Mammary epithelial cell (primary cell): ENCODE measurements at regions of chr12 and their contacts with region 1.

Region 1: DNA sequence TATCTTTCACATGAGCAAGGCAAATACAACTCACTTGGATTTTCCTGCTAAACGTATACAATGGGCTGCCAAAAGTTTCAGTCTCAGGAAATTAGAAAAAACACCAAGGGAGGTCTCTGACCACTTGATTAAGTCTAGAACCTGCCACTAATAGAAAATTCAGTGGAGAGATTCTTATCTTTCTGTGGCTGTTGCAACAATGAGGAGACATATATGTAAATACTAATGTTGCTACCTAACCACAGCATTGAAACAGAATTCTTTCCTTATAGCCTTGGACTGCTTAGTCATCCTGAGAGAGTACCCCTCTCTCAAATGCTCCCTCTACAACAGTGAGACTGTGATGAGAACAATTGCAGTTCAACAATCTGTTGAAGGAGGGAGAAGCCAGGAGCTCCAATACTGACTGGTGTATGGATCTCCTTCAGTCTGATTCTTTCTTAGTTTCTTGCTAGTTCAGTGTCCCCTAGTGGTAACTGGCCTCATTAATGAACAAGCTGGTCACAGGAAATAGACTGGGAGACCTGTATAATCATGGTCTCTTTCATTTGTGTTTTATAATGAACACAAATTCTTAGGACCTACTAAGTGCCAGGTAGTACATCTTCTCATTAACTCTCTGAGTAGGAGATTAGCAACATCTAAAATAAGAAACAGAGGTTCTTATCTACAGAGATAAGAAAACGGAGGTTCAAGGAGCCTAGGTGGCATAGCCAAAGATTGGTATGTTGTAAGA is 164.5 kb downstream of the SLC38A4 start:
- DNase-seq: peak; percentile 75
- H3K4me3 ChIP-seq: no peak overlapping the region
- H3K27ac ChIP-seq: peak overlapping the region; percentile 64
- H3K4me1 ChIP-seq: peaks cover 55% of the 10 kb centered on the region
- H3K27me3 ChIP-seq: no peaks in the 10 kb centered on the region
- CTCF ChIP-seq: peak; percentile 80 to 86

Region 2: GRCh38 chr12:46268590-46269558 is 392.4 kb before region 1 on chr12 and contains the start of gene SLC38A1:
- CTCF ChIA-PET with region 1: no interaction called
- dilution Hi-C with region 1: no loop called
- in situ Hi-C with region 1: no loop called
- intact Hi-C with region 1: loop called (anchors 5 kb)
- DNase-seq: peak; percentile 88
- H3K4me3 ChIP-seq: peak within 1 kb of the TSS; percentile 51 to 97 (median 95)
- H3K27ac ChIP-seq: peak within 1 kb of the TSS; percentile 96
- H3K4me1 ChIP-seq: peaks cover 31% of the 10 kb centered on the region
- H3K27me3 ChIP-seq: no peaks in the 10 kb centered on the region
- CTCF ChIP-seq: peak in 1 of 2 donors; percentile 17
- total RNA-seq, gene SLC38A1: 208 to 360 TPM

Region 3: DNA sequence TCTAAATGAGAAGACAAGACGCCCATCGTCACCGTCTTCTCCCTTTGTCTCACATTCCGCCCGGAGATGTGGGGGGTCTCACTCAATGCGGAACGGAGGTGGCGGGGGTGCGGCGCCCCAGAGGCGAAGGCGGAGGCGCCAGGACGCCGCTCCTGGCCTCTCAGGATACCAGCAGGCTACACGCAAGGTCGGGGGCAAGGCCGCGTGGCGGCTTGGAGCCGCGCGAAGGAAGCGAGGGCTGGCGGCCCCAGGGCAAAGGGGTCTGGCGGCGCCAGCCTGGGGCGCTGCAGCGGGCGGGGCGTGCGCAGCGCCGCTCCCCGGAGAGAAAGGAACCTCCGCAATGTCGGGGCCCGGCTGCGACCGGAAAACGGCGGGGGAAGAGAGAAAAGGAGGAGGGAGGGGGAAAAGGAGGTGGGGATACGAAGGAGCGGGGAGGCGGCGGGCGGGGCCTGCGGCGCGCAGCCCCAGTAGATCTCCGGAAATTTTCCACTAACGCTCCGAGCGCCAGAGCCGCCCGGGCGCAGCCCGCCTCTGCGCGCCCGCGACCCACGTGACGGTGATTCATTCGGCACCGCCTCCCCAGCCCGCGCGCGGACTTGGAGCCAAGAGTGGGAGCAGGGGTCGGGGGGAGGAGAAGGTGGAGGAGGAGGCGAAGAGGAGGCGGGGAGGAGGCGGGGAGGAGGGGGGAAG is 278.2 kb before region 1 on chr12:
- CTCF ChIA-PET with region 1: interaction called, 9 read pairs
- dilution Hi-C with region 1: no loop called
- in situ Hi-C with region 1: loop called in 1 of 2 experiments (anchors 10 kb)
- intact Hi-C with region 1: no loop called
- DNase-seq: peak; percentile 95
- H3K4me3 ChIP-seq: peak overlapping the region; percentile 60 to 68 (median 64)
- H3K27ac ChIP-seq: peak overlapping the region; percentile 96
- H3K4me1 ChIP-seq: peaks cover 50% of the 10 kb centered on the region
- H3K27me3 ChIP-seq: no peaks in the 10 kb centered on the region
- CTCF ChIP-seq: peak in 1 of 2 donors; percentile 8

Region 4: DNA sequence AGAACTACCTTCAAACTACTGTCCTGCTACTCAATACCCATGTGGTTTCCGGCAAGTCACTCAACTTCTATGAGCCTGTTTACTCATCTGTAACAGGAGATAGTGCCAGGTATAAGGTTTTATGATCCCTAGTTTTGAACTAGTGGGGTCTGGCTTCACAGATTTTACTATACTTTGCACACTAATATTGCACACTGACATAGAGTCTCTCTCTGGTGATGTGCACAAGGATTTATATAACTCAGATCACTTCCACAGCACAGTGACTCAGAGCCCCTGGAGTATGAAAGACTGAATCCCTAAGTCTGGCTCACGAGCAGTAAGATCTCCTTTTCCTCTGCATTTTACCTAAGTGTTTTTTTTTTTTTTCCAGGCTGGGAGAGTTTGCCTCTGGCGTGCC is 219.0 kb before region 1 on chr12:
- CTCF ChIA-PET with region 1: no interaction called
- dilution Hi-C with region 1: no loop called
- in situ Hi-C with region 1: no loop called
- intact Hi-C with region 1: loop called (anchors 2 kb)
- DNase-seq: peak; percentile 73
- H3K4me3 ChIP-seq: peak overlapping the region in 2 of 3 experiments; percentile 7 to 10
- H3K27ac ChIP-seq: peak overlapping the region; percentile 96
- H3K4me1 ChIP-seq: peaks cover 60% of the 10 kb centered on the region
- H3K27me3 ChIP-seq: no peaks in the 10 kb centered on the region
- CTCF ChIP-seq: no peak

Region 5: GRCh38 chr12:46546634-46547286 is 114.5 kb before region 1 on chr12:
- CTCF ChIA-PET with region 1: no interaction called
- dilution Hi-C with region 1: no loop called
- in situ Hi-C with region 1: loop called in 1 of 2 experiments (anchors 5 kb)
- intact Hi-C with region 1: loop called (anchors 1 kb)
- DNase-seq: peak; percentile 71
- H3K4me3 ChIP-seq: no peak overlapping the region
- H3K27ac ChIP-seq: peak overlapping the region; percentile 100
- H3K4me1 ChIP-seq: peaks cover 56% of the 10 kb centered on the region
- H3K27me3 ChIP-seq: no peaks in the 10 kb centered on the region
- CTCF ChIP-seq: no peak

Region 6: GRCh38 chr12:46562625-46563228 is 98.6 kb before region 1 on chr12:
- CTCF ChIA-PET with region 1: no interaction called
- dilution Hi-C with region 1: no loop called
- in situ Hi-C with region 1: loop called in 1 of 2 experiments (anchors 10 kb)
- intact Hi-C with region 1: loop called (anchors 2 kb)
- DNase-seq: peak; percentile 95
- H3K4me3 ChIP-seq: no peak overlapping the region
- H3K27ac ChIP-seq: peak overlapping the region; percentile 96
- H3K4me1 ChIP-seq: peaks cover 41% of the 10 kb centered on the region
- H3K27me3 ChIP-seq: no peaks in the 10 kb centered on the region
- CTCF ChIP-seq: no peak

Region 7: DNA sequence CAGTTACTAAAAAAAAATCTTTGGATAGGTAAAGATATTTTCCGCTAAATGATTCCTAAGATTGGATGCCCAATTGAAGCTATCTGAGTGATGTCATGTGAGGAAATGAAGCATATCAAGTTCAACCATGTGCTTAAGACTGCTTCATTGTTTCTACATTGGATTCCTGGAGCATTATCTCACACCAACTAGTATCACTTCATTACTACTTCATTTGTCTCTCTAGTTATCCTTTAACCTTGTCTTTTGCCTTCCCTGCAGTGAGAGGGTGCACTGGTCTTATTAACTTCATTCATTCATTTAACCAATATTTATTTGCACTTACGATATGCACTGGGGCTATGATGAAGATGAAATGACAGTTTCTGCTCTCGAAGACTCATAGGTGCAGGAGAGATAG is 33.6 kb before region 1 on chr12:
- CTCF ChIA-PET with region 1: no interaction called
- dilution Hi-C with region 1: no loop called
- in situ Hi-C with region 1: no loop called
- intact Hi-C with region 1: no loop called
- DNase-seq: peak; percentile 26
- H3K4me3 ChIP-seq: no peak overlapping the region
- H3K27ac ChIP-seq: no peak overlapping the region
- H3K4me1 ChIP-seq: no peaks in the 10 kb centered on the region
- H3K27me3 ChIP-seq: no peaks in the 10 kb centered on the region
- CTCF ChIP-seq: no peak